Activated CD4-positive, alpha-beta memory T cell treated with anti-CD3 and anti-CD28 coated beads for 36 hours (primary cell): ENCODE measurements at regions of chr5 and their contacts with region 1.

Region 1: GRCh38 chr5:139482050-139482889 is at the start of gene STING1:
- DNase-seq: peak; percentile 83
- H3K4me3 Mint-ChIP-seq: peak within 1 kb of the TSS; percentile 94
- H3K27ac Mint-ChIP-seq: peak within 1 kb of the TSS; percentile 99
- H3K4me1 Mint-ChIP-seq: peaks cover 38% of the 10 kb centered on the region
- H3K27me3 Mint-ChIP-seq: no peaks in the 10 kb centered on the region
- total RNA-seq, gene STING1: 339 to 344 TPM

Region 2: DNA sequence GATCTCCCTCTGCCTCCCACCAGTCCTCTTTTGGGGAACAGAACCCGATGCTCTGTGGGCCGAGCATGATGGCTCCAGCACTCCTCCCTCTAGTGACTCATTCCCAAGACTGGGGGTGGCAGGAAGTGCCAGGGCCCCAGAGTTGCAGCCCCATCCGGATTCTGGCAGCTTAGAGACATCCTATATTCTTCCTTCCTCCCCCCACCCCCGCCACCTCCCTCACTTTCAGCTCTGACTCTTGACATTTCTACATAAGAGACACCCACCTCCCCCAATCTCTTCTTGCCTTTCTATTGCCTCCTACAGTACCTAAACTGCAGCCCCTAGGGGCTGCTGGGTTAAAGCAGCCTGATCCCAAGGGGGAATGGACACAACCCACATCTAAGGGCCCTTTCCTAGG is 235.9 kb before region 1 on chr5:
- CTCF ChIA-PET with region 1: no interaction called
- POLR2A ChIA-PET with region 1: no interaction called
- intact Hi-C with region 1: no loop called
- DNase-seq: peak; percentile 85
- H3K4me3 Mint-ChIP-seq: peak overlapping the region; percentile 43
- H3K27ac Mint-ChIP-seq: peak overlapping the region; percentile 88
- H3K4me1 Mint-ChIP-seq: peaks cover 26% of the 10 kb centered on the region
- H3K27me3 Mint-ChIP-seq: peaks cover 2% of the 10 kb centered on the region

Region 3: DNA sequence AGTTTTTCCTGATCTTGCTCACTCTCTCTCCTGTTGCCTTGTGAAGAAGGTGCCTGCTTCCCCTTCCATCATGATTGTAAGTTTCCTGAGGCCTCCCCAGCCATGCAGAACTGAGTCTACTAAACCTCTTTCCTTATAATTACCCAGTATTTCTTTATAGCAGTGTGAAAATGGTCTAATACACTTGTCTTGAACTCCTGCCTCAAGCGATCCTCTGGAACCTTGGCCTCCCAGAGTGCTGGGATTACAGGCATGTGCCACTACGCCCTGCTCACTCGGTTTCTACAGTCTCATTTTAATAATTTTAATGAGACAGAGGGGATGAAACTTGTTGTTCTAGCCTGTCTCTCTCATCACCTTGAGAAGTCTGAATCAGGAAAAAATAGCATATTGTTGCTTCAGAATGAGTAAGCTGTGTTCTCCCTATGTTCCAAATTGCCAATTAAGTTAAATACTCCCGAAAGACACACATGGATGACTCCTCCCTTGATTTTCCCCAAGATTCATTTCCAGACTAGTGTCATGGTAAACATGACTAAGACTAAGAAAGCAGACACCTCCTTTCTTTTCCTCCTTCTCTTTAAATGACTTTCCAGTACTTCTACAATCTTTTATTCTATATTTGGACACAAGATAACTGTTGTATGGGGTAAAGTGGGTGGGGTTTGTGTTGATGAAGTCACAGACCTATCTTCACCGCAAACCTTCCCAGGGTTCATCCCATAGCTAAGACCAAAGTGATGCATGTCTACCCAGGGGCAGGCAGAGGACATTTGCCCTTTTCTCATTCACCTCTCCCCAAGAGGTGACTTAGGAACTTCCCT is 35.1 kb before region 1 on chr5:
- CTCF ChIA-PET with region 1: interaction called, 3 read pairs
- POLR2A ChIA-PET with region 1: interaction called, 69 read pairs
- intact Hi-C with region 1: loop called (anchors 1 kb)
- DNase-seq: peak; percentile 72
- H3K4me3 Mint-ChIP-seq: peak overlapping the region; percentile 7
- H3K27ac Mint-ChIP-seq: peak overlapping the region; percentile 93
- H3K4me1 Mint-ChIP-seq: peaks cover 67% of the 10 kb centered on the region
- H3K27me3 Mint-ChIP-seq: no peaks in the 10 kb centered on the region

Region 4: GRCh38 chr5:139458580-139459406 is 23.5 kb before region 1 on chr5:
- CTCF ChIA-PET with region 1: interaction called, 10 read pairs
- POLR2A ChIA-PET with region 1: interaction called, 37 read pairs
- intact Hi-C with region 1: loop called (anchors 1 kb)
- DNase-seq: peak; percentile 90
- H3K4me3 Mint-ChIP-seq: peak overlapping the region; percentile 56
- H3K27ac Mint-ChIP-seq: peak overlapping the region; percentile 97
- H3K4me1 Mint-ChIP-seq: peaks cover 65% of the 10 kb centered on the region
- H3K27me3 Mint-ChIP-seq: no peaks in the 10 kb centered on the region

Region 5: GRCh38 chr5:139468421-139468931 is 13.8 kb before region 1 on chr5:
- CTCF ChIA-PET with region 1: interaction called, 8 read pairs
- POLR2A ChIA-PET with region 1: interaction called, 50 read pairs
- intact Hi-C with region 1: loop called (anchors 1 kb)
- DNase-seq: peak; percentile 69
- H3K4me3 Mint-ChIP-seq: peak overlapping the region; percentile 41
- H3K27ac Mint-ChIP-seq: peak overlapping the region; percentile 83
- H3K4me1 Mint-ChIP-seq: peaks cover 51% of the 10 kb centered on the region
- H3K27me3 Mint-ChIP-seq: no peaks in the 10 kb centered on the region

Region 6: DNA sequence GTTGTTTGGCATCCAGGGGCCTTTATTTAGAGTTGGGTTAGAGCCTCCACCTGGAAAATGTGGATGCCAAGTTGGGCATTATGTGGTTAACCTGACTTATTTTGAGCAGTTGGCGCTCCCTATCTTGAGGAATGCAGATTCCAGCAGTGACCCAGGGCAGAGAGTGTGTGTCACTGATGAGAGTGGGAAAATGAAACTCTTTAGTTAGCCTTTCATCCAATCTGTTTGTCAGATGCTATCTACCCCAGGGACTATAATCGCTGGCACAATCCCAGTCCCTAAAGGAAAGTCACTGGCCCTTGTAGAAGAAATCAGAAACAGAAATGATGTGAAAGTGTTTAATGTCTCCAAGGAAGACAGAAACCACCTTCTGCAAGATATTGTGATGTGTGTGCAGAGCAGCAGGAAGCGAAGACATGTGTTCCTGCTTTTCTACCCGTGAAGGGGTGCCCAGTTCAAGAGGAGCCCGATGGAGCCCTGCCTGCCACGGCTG is 10.5 kb after region 1 on chr5:
- CTCF ChIA-PET with region 1: interaction called, 7 read pairs
- POLR2A ChIA-PET with region 1: interaction called, 15 read pairs
- intact Hi-C with region 1: no loop called
- DNase-seq: no peak
- H3K4me3 Mint-ChIP-seq: no peak overlapping the region
- H3K27ac Mint-ChIP-seq: no peak overlapping the region
- H3K4me1 Mint-ChIP-seq: peaks cover 35% of the 10 kb centered on the region
- H3K27me3 Mint-ChIP-seq: no peaks in the 10 kb centered on the region